PC-9 (cell line): ENCODE measurements at regions of chr11 and their contacts with region 1.

Region 1: DNA sequence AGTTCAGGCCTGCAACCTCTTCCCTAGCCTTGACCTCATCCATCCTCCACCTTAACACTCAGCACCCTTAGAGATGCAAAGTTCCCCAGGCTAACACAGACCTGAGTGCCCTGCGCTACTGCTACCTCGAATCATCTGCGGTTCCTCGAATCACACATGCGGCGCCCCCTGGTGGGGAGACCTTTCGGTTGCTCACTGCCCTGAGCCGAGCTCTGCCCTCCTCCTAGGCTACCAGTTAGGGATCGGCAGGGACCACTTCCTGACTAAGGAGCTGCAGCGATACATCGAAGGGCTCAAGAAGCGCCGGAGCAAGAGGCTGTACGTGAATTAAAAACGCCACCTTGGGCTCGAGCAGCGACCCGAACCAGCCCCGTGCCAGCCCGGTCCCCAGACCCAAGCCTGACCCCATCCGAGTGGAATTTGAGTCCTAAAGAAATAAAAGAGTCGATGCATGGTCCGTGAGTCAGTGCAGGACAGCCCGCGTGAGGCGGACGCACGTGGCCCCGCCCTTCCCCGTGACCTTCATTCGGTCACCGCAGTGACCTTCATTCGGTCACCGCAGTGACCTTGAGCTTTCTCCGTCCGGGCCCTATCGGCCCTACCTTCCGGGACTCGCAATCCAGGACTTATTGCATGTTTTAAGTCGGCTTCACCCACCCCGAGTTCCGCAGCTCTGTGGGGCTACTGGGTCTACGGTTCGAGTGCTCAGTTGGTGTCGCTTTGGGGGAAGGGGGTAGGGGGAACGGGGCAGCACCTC is 830 bp upstream of the ESRRA start:
- DNase-seq: peak; percentile 81 to 95
- H3K4me3 ChIP-seq: peak overlapping the region; percentile 74
- H3K27ac ChIP-seq: peak overlapping the region; percentile 71
- H3K4me1 ChIP-seq: peaks cover 27% of the 10 kb centered on the region
- H3K27me3 ChIP-seq: 0 out of 2 replicates have a peak, but pooled peaks cover 7% of the 10 kb centered on the region
- CTCF ChIP-seq: peak; percentile 97

Region 2: DNA sequence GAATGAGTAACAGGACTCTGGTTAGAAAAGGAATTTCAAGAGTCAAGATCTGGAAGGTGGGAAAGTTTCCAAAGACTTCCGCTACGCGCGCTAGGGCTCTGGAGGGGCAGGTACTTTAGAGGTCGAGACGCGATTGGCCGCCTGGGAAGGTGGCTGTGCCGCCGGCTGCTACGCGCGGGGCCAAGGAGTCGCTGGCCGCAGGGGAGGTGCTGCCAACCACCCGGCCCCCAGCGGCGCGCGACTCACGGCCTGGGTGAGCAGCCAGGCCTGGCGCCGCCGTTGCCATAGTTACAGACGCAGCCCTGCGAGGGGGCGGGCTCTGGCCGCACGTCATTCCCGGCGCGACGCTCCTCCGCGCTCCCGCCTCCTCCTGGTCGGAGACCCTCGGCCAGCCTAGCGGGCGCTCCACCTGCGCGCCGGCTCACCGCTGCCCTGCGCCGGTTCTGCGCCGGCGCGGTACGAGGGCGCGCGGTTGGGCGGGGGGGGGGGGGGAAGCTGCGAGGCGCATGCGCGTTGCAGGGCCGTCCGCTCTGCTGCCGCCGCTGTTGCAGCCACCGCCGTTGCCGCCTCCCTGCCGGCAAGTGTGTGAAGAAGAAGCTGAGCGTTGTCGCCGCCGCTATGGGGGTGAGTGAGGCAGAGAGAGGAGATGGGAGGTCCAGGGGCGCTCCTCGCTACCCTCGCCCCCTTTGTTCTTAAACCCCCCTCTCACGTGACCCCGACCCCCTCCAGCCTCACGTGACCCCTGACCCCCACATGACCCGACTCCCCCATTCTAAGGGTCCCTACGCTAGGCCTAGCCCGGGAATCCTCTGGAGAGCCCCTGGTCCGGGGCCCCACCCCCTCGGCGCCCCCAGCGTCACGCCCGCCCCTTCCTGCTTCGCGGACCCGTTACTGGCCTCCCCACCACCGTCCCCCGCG is 365.8 kb before region 1 on chr11 and contains the start of gene NAA40:
- CTCF ChIA-PET with region 1: no interaction called
- POLR2A ChIA-PET with region 1: interaction called, 10 read pairs
- intact Hi-C with region 1: no loop called
- DNase-seq: peak; percentile 97 to 99
- H3K4me3 ChIP-seq: peak within 1 kb of the TSS; percentile 77
- H3K27ac ChIP-seq: peak within 1 kb of the TSS; percentile 83
- H3K4me1 ChIP-seq: peaks cover 44% of the 10 kb centered on the region
- H3K27me3 ChIP-seq: no peaks in the 10 kb centered on the region
- CTCF ChIP-seq: no peak
- total RNA-seq, gene NAA40: 47.4 and 50.4 TPM in 2 replicates

Region 3: GRCh38 chr11:64036087-64037026 is 268.1 kb before region 1 on chr11:
- CTCF ChIA-PET with region 1: no interaction called
- POLR2A ChIA-PET with region 1: no interaction called
- intact Hi-C with region 1: no loop called
- DNase-seq: no peak
- H3K4me3 ChIP-seq: no peak overlapping the region
- H3K27ac ChIP-seq: no peak overlapping the region
- H3K4me1 ChIP-seq: no peaks in the 10 kb centered on the region
- H3K27me3 ChIP-seq: no peaks in the 10 kb centered on the region
- CTCF ChIP-seq: no peak

Region 4: GRCh38 chr11:64185816-64186498 is 118.5 kb before region 1 on chr11 and contains the start of gene STIP1:
- CTCF ChIA-PET with region 1: interaction called, 3 read pairs
- POLR2A ChIA-PET with region 1: interaction called, 19 read pairs
- intact Hi-C with region 1: loop called (anchors 2 kb)
- DNase-seq: peak; percentile 100
- H3K4me3 ChIP-seq: peak within 1 kb of the TSS; percentile 64
- H3K27ac ChIP-seq: peak within 1 kb of the TSS; percentile 64
- H3K4me1 ChIP-seq: peaks cover 28% of the 10 kb centered on the region
- H3K27me3 ChIP-seq: no peaks in the 10 kb centered on the region
- CTCF ChIP-seq: peak; percentile 31; the same call in 1 of the 2 replicates
- total RNA-seq, gene STIP1: 267 and 299 TPM in 2 replicates

Region 5: DNA sequence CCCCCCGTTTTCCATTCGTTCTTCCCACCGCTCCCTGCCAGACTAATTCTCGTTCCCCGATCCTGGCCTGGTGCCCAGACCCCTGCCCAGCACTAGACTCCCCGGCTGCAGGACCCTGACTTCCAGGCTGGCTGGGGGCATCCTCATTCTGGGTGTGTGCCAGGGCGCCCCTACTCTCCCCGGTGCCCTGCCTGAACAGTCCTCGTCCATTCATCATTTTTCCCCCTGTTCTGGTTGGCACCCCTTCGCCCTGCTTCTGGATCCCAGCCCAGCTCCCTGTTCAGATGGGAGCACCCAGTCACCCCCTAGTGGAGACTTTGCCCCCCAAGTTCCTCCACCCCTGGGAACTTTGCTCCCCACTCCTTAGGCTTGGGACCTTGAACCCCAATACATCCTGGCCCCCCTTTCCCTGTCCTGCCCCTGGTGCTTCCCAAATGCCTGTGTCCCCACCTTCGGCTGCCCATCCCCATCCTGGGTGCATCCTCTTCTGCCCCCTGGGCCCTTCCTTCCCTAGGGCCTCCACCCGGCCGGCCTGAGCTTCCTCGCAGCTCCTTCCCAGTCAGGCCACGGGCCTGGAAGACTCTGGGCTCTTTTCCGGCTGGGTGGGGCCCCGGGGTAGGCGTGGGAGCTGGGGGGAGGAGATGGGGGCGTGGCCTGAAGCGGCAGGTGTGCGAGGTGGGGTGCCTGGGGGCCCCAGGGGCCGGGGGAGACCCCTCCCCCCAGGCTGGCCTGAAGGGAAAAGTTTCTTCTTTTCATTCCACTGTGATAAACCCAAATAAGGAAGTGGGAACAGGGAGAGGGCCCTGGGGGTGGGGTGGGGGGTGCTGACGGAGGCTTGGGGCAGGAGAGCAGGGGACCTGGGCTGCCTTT is 52.3 kb before region 1 on chr11:
- CTCF ChIA-PET with region 1: interaction called, 22 read pairs
- POLR2A ChIA-PET with region 1: no interaction called
- intact Hi-C with region 1: loop called (anchors 1 kb)
- DNase-seq: peak in 1 of 2 experiments; percentile 76
- H3K4me3 ChIP-seq: peak overlapping the region; percentile 88
- H3K27ac ChIP-seq: no peak overlapping the region
- H3K4me1 ChIP-seq: peaks cover 5% of the 10 kb centered on the region; the same call in 1 of the 2 replicates
- H3K27me3 ChIP-seq: no peaks in the 10 kb centered on the region
- CTCF ChIP-seq: peak; percentile 61

Region 6: DNA sequence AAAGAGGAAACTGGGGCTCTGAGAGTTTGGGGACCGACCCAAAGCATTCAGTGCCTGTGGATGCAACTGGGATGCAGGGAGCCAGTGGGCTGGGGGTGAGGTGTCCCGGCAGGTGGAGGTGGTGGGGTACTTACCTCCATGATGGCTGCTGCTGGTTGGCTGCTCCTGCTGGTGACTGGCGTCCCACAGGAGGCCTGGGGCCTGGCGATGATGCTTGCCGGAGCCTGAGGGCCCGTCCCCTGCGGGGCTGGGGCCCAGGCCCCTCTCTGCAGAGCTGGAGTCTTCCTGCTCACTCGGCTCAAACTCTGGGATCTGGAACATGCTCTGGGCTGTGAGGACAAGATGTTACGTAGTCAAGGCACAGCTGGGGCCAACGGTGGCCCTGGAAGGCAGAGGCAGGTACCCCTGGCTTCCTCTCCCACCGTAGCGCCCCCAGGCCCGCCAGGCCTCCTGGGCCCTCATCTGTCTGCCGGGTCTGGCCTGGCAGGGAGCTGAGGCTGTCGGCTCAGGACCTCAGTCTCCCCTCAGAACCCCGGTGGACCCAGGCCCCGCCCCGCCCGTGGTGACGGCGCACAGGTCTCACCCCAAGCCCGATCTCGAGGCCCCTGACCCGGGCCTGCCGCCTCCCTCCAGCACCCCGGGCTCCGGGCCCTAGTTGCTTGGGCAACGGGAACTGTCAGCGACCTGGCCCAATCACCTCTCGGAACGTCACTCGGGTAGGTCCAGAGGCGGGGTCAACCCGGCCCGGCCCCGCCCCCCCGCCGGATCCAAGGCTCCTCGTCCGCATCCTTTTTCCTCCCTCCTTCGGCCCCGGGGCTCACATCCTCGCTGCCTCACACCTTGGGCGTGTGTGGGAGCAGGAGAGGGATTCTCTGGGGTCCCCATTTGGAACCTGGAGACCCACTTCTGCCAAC is 20.2 kb before region 1 on chr11 and contains the start of gene BAD:
- CTCF ChIA-PET with region 1: interaction called, 6 read pairs
- POLR2A ChIA-PET with region 1: interaction called, 5 read pairs
- intact Hi-C with region 1: loop called (anchors 1 kb)
- DNase-seq: peak; percentile 87 to 95
- H3K4me3 ChIP-seq: peak within 1 kb of the TSS; percentile 67
- H3K27ac ChIP-seq: peak within 1 kb of the TSS; percentile 54
- H3K4me1 ChIP-seq: peaks cover 22% of the 10 kb centered on the region
- H3K27me3 ChIP-seq: no peaks in the 10 kb centered on the region
- CTCF ChIP-seq: no peak
- total RNA-seq, gene BAD: 94.3 and 94.4 TPM in 2 replicates

Region 7: DNA sequence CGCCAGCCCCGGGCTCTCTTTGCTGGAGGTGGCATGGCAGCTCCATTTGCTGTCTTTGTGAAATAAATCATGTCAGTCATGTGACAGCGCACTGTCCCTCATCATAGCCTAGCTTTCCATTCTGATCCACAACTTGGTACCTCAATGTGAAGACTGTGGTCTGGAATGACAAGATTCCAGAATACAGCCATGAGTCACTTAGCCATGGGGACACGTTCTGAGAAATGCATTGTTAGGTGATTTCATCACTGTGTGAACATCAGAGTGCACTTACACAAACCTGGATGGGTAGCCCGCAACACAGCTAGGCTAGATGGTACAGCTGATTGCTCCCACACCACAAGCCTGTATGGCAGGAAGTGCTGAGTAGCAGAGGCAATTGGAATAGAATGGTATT is 81.8 kb after region 1 on chr11:
- CTCF ChIA-PET with region 1: no interaction called
- POLR2A ChIA-PET with region 1: interaction called, 23 read pairs
- intact Hi-C with region 1: no loop called
- DNase-seq: peak; percentile 81 to 98
- H3K4me3 ChIP-seq: no peak overlapping the region
- H3K27ac ChIP-seq: no peak overlapping the region
- H3K4me1 ChIP-seq: peaks cover 44% of the 10 kb centered on the region
- H3K27me3 ChIP-seq: no peaks in the 10 kb centered on the region
- CTCF ChIP-seq: no peak

Region 8: GRCh38 chr11:64448599-64449556 is 144.4 kb after region 1 on chr11:
- CTCF ChIA-PET with region 1: no interaction called
- POLR2A ChIA-PET with region 1: no interaction called
- intact Hi-C with region 1: no loop called
- DNase-seq: peak; percentile 60 to 89
- H3K4me3 ChIP-seq: peak overlapping the region; percentile 40; the same call in 1 of the 2 replicates
- H3K27ac ChIP-seq: no peak overlapping the region
- H3K4me1 ChIP-seq: peaks cover 16% of the 10 kb centered on the region
- H3K27me3 ChIP-seq: peaks cover 30% of the 10 kb centered on the region
- CTCF ChIP-seq: peak; percentile 92